Heart left ventricle (tissue), 16 donors: ENCODE measurements at regions of chr19 and their contacts with region 1.

Region 1: DNA sequence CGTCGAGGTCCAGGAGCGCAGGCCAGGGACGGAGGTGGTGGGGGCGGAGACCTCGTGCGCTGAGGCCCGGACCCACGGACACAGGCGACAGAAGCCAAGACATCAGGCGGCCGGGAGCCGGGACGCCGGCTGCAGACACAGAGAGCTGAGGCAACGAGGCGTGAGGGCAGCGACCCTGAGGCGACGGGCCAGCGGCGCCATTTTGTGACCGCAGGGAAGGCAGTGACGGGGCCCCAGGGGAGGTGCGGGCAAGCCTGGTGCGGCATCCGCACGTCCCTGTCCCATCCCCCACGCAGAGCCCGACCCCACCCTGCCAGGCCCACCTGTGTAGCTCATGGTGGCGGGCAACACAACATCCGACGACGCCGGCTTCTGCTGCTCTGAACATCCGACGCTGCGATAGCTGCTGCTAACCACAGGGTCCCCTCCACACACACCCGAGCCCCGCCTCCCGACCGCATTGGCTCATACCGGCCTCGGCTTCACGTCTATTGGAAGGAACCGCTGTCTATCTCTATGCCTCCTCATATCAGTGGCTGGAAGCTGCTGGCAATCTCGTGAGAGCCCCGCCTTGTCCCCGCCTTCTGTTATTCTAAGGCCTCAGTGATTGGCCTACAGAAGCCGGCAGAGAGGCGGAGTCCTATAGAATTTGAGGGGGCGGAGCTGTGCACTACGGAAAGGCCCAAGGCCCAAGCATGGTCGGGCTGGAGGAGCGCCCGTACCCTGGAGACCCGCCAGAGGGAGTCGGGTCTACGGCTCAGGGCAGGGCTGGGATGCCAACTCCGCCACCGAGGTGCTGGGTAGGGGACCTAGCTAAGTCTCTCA is at the start of gene AKAP8L:
- DNase-seq: peak; percentile 98 to 100 (median 99)
- ATAC-seq: peak; percentile 95 to 98 (median 96)
- H3K4me3 ChIP-seq: peak within 1 kb of the TSS; percentile 75 to 100 (median 93)
- H3K27ac ChIP-seq: peak within 1 kb of the TSS; percentile 71 to 95 (median 91)
- H3K4me1 ChIP-seq: peaks cover 6 to 58% (median 39%) of the 10 kb centered on the region in 12 donors
- H3K27me3 ChIP-seq: no peaks in the 10 kb centered on the region
- CTCF ChIP-seq: peak; percentile 50 to 81 (median 63)
- POLR2A ChIP-seq: peak; percentile 53 to 91
- total RNA-seq, gene AKAP8L: 46.5 to 72.2 (median 60.1) TPM

Region 2: DNA sequence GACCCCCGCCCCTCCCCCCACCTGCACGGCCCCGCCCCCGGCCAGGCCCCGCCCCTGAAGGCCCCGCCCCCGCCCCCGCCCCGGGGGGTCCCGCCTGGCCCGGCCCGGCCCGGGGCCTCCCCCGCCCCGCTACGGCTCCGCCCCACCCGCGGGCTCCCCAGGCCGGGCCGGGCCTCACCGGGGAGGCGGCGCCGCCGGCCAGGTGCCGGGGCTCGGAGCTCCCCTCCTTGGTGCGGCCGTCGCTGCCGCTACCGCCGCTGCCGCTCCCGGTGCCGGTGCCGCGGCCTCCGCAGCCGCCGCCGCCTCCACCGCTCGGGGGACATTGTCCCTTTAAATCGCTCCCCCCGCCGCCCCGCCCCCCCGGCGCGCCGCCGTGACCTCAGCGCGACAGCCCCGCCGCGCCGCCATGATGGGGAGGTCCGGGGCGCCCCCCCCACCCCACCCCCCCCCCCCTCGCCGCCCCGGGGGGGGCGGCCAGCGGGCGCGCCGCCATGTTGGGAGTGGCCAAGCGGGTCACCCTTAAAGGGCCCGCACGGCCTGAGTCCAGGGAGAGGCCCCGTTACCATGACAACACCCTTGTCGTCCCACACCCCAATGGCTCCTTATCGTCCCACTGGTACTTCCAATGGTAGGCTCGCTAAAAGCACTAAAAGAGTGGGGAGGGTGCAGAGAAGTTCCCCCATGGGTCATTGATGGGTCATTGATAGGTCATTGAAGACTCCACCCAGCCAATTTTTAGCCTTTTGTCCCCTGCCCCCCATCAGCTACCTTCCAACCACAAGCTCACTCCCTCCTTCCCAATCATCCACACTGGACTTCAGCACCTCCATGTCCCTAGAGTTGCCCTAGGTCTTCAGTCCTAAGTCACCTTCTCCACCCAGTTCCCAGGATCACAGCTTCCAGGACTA is 31.1 kb after region 1 on chr19 and contains the start of gene WIZ:
- intact Hi-C with region 1: loop called in 1 of 10 experiments (anchors 2 kb)
- DNase-seq: peak; percentile 88 to 94 (median 89)
- ATAC-seq: peak; percentile 5 to 41 (median 21)
- H3K4me3 ChIP-seq: peak within 1 kb of the TSS; percentile 65 to 95 (median 74)
- H3K27ac ChIP-seq: peak within 1 kb of the TSS; percentile 67 to 94 (median 86)
- H3K4me1 ChIP-seq: peaks cover 3 to 43% (median 20%) of the 10 kb centered on the region in 12 donors
- H3K27me3 ChIP-seq: peaks cover 0 to 9% (median 3%) of the 10 kb centered on the region in 9 donors
- CTCF ChIP-seq: no peak
- POLR2A ChIP-seq: peak in 1 of 2 donors; percentile 21
- total RNA-seq, gene WIZ: 23.1 to 52.4 (median 25.7) TPM